Tibial artery (tissue), 4 donors: ENCODE measurements at regions of chr7 and their contacts with region 1.

Region 1: GRCh38 chr7:155456738-155457564 is 978 bp upstream of the EN2 start:
- DNase-seq: peak in 1 of 2 donors; percentile 31
- H3K4me3 ChIP-seq: peak overlapping the region; percentile 45
- H3K27ac ChIP-seq: no peak overlapping the region
- H3K4me1 ChIP-seq: peaks cover 0 to 56% (median 47%) of the 10 kb centered on the region in 4 donors
- H3K27me3 ChIP-seq: peaks cover 3 to 96% of the 10 kb centered on the region in 2 donors
- CTCF ChIP-seq: no peak

Region 2: GRCh38 chr7:154844499-154844898 is 612.5 kb before region 1 on chr7:
- intact Hi-C with region 1: no loop called
- DNase-seq: no peak
- H3K4me3 ChIP-seq: no peak overlapping the region
- H3K27ac ChIP-seq: no peak overlapping the region
- H3K4me1 ChIP-seq: no peaks in the 10 kb centered on the region
- H3K27me3 ChIP-seq: no peaks in the 10 kb centered on the region
- CTCF ChIP-seq: no peak

Region 3: GRCh38 chr7:155069992-155070751 is 386.8 kb before region 1 on chr7 and contains the start of gene HTR5A:
- intact Hi-C with region 1: loop called (anchors 5 kb)
- DNase-seq: peak; percentile 65 to 73
- H3K4me3 ChIP-seq: no peak within 1 kb of the TSS
- H3K27ac ChIP-seq: no peak within 1 kb of the TSS
- H3K4me1 ChIP-seq: peaks cover 0 to 4% (median 0%) of the 10 kb centered on the region in 4 donors
- H3K27me3 ChIP-seq: peaks cover 0 to 14% of the 10 kb centered on the region in 2 donors
- CTCF ChIP-seq: no peak